ENCODE measurements at regions of chr12 and their contacts with region 1.

Region 1: GRCh38 chr12:97713270-97713669 is 250.7 kb downstream of the RMST start:
- DNase-seq: no peak
- ATAC-seq: no peak
- H3K4me3 Mint-ChIP-seq: no peak overlapping the region
- H3K27ac Mint-ChIP-seq: no peak overlapping the region
- H3K4me1 Mint-ChIP-seq: peaks cover 24% of the 10 kb centered on the region
- H3K27me3 Mint-ChIP-seq: no peaks in the 10 kb centered on the region
- CTCF ChIP-seq: no peak

Region 2: DNA sequence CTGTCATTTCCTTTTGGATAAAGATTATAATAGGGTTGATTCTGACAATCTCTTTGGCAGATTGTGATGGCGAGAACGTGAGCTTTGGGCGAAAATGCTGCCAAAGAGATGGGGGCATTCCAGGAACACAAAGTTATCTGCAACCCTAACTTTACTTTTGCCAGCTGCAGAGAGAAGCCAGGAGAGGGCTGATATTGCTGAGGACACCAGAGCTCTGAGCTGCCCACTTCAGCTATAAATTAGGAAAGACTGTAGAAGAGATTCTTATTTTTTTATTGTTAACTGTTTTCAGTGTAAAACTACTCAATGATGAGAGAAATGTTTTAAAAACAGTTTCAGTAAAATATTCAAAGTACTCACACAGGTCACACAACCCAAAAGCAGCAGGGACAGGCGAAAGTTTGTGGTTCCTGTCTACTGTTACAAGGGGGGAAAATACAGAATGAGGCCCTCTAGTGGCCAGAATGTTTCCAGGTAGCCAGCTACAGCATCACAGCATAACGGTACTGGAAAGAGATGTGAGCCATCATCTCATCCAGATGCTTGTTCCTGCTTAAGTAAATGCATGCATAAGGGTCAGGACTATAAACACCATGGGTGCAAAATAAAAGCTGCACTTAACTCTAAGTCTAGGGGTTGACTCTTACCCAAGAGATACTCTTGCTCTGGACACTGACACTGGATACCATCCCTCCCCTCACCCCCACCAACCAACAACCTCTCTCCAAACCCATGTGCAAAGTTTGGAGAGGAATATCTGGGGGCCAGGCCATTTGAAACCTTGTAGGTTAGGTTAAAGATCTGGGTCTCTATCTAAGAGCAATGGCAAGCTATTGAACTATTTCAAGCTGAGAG is 247.7 kb after region 1 on chr12:
- CTCF ChIA-PET with region 1: interaction called, 10 read pairs
- POLR2A ChIA-PET with region 1: no interaction called
- DNase-seq: peak; percentile 57
- ATAC-seq: peak; percentile 88
- H3K4me3 Mint-ChIP-seq: no peak overlapping the region
- H3K27ac Mint-ChIP-seq: no peak overlapping the region
- H3K4me1 Mint-ChIP-seq: no peaks in the 10 kb centered on the region
- H3K27me3 Mint-ChIP-seq: no peaks in the 10 kb centered on the region
- CTCF ChIP-seq: peak; percentile 91

Measured in WTC11 (cell line).